ENCODE measurements at regions of chr2 and their contacts with region 1.

Region 1: GRCh38 chr2:38315707-38316333 is 61.3 kb downstream of the ATL2 start:
- DNase-seq: peak in 1 of 2 donors; percentile 66
- ATAC-seq: peak in 2 of 3 donors; percentile 53 to 57
- H3K4me3 ChIP-seq: no peak overlapping the region
- H3K4me3 Mint-ChIP-seq: no peak overlapping the region
- H3K27ac ChIP-seq: no peak overlapping the region
- H3K27ac Mint-ChIP-seq: no peak overlapping the region
- H3K4me1 ChIP-seq: no peaks in the 10 kb centered on the region
- H3K4me1 Mint-ChIP-seq: no peaks in the 10 kb centered on the region
- H3K27me3 ChIP-seq: no peaks in the 10 kb centered on the region
- H3K27me3 Mint-ChIP-seq: no peaks in the 10 kb centered on the region
- CTCF ChIP-seq: peak; percentile 69

Region 2: GRCh38 chr2:38352336-38352735 is 36.5 kb after region 1 on chr2:
- intact Hi-C with region 1: no loop called
- DNase-seq: no peak
- ATAC-seq: no peak
- H3K4me3 ChIP-seq: no peak overlapping the region
- H3K4me3 Mint-ChIP-seq: peak overlapping the region; percentile 49
- H3K27ac ChIP-seq: no peak overlapping the region
- H3K27ac Mint-ChIP-seq: peak overlapping the region; percentile 25 to 56
- H3K4me1 ChIP-seq: peaks cover 4% of the 10 kb centered on the region
- H3K4me1 Mint-ChIP-seq: peaks cover 23 to 27% of the 10 kb centered on the region in 2 donors
- H3K27me3 ChIP-seq: no peaks in the 10 kb centered on the region
- H3K27me3 Mint-ChIP-seq: no peaks in the 10 kb centered on the region
- CTCF ChIP-seq: no peak

Region 3: GRCh38 chr2:38377050-38377828 is 61.4 kb after region 1 on chr2 and contains the start of gene ATL2:
- intact Hi-C with region 1: loop called (anchors 5 kb)
- DNase-seq: peak; percentile 89 to 95
- ATAC-seq: peak; percentile 81 to 93 (median 84)
- H3K4me3 ChIP-seq: peak within 1 kb of the TSS; percentile 97
- H3K4me3 Mint-ChIP-seq: peak within 1 kb of the TSS; percentile 99
- H3K27ac ChIP-seq: peak within 1 kb of the TSS; percentile 91
- H3K27ac Mint-ChIP-seq: peak within 1 kb of the TSS; percentile 90 to 95
- H3K4me1 ChIP-seq: peaks cover 14% of the 10 kb centered on the region
- H3K4me1 Mint-ChIP-seq: peaks cover 39 to 47% of the 10 kb centered on the region in 2 donors
- H3K27me3 ChIP-seq: no peaks in the 10 kb centered on the region
- H3K27me3 Mint-ChIP-seq: no peaks in the 10 kb centered on the region
- CTCF ChIP-seq: no peak
- total RNA-seq, gene ATL2: 48.3 to 51.8 (median 51.5) TPM

Region 4: GRCh38 chr2:38508311-38509039 is 192.7 kb after region 1 on chr2:
- intact Hi-C with region 1: loop called (anchors 1 kb)
- DNase-seq: peak; percentile 55 to 87
- ATAC-seq: peak; percentile 70 to 85 (median 78)
- H3K4me3 ChIP-seq: no peak overlapping the region
- H3K4me3 Mint-ChIP-seq: no peak overlapping the region
- H3K27ac ChIP-seq: no peak overlapping the region
- H3K27ac Mint-ChIP-seq: no peak overlapping the region
- H3K4me1 ChIP-seq: no peaks in the 10 kb centered on the region
- H3K4me1 Mint-ChIP-seq: no peaks in the 10 kb centered on the region
- H3K27me3 ChIP-seq: no peaks in the 10 kb centered on the region
- H3K27me3 Mint-ChIP-seq: peaks cover 0 to 1% of the 10 kb centered on the region in 2 donors
- CTCF ChIP-seq: peak; percentile 67

Region 5: DNA sequence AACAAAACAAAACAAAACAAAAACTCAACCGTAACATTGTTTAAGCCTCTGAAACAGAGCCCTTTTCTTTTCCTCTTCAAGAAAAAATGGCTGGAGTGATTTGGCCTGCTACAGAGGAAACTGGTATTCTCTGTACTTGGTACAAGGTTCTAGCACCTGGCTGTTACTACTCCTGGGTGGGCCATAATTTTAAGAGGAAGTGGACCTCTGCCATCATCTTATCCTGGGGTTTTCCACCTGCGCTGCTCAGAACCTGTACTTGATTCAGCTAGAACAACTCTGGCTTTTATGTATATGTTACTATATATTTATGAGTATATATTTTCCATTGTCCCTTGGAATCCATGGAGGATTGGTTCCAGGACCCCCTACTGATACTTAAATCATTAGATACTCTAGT is 412.9 kb after region 1 on chr2:
- intact Hi-C with region 1: loop called (anchors 5 kb)
- DNase-seq: no peak
- ATAC-seq: no peak
- H3K4me3 ChIP-seq: no peak overlapping the region
- H3K4me3 Mint-ChIP-seq: no peak overlapping the region
- H3K27ac ChIP-seq: no peak overlapping the region
- H3K27ac Mint-ChIP-seq: no peak overlapping the region
- H3K4me1 ChIP-seq: no peaks in the 10 kb centered on the region
- H3K4me1 Mint-ChIP-seq: no peaks in the 10 kb centered on the region
- H3K27me3 ChIP-seq: no peaks in the 10 kb centered on the region
- H3K27me3 Mint-ChIP-seq: no peaks in the 10 kb centered on the region
- CTCF ChIP-seq: no peak